CD4-positive, alpha-beta memory T cell (primary cell): ENCODE measurements at regions of chr15 and their contacts with region 1.

Region 1: DNA sequence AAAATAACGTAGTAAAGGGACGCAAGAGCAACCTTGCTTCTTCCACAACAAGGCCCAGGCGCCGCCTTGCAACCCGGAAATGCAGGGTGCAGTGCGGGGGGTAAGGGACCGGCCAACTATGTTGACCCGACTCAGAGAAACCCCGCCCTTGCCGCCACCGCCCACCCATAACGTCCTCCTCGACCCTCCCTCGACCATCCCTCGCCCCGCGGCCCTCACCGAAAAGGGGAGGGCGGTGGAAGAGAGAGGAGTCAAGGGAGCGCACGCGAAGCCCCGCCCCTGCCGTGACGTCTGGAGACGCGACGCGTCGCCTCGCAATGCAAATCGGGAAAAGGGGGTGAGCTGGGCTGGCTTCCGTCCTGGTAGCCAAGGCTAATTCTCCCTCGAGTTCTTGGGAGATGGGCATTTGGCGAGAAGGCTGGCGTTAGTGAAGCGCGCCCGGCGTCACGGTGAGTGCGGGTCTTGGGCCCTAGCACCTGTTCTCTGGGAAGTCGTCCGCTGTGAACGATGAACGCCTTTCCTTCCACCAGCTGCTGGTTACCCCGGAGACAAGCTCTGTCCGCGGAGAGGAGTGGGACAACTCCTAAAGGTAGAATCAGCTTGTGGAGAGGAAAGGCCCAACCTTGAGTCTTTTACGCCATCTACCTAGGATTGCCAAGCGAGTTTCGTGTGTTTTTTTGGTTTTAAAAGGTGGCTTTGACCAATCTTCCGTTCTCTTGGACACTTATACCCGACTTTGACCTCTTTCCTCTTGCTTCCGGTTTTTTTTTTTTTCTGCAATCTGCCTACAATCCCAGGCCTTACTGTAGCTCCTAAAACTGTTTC is at the start of gene USP8:
- DNase-seq: peak; percentile 90 to 93 (median 92)
- H3K4me3 ChIP-seq: peak within 1 kb of the TSS; percentile 99
- H3K4me3 Mint-ChIP-seq: peak within 1 kb of the TSS; percentile 96 to 100 (median 98)
- H3K27ac ChIP-seq: peak within 1 kb of the TSS; percentile 94
- H3K27ac Mint-ChIP-seq: peak within 1 kb of the TSS; percentile 98 to 100 (median 99)
- H3K4me1 ChIP-seq: peaks cover 32% of the 10 kb centered on the region
- H3K4me1 Mint-ChIP-seq: peaks cover 13 to 53% (median 32%) of the 10 kb centered on the region in 4 donors
- H3K27me3 ChIP-seq: no peaks in the 10 kb centered on the region
- H3K27me3 Mint-ChIP-seq: no peaks in the 10 kb centered on the region
- total RNA-seq, gene USP8: 68.9 to 70.9 TPM

Region 2: GRCh38 chr15:50686468-50687301 is 262.4 kb after region 1 on chr15 and contains the start of gene TRPM7:
- CTCF ChIA-PET with region 1: no interaction called
- POLR2A ChIA-PET with region 1: interaction called, 4 read pairs
- intact Hi-C with region 1: loop called (anchors 2 kb)
- DNase-seq: peak; percentile 86 to 90 (median 90)
- H3K4me3 ChIP-seq: peak within 1 kb of the TSS; percentile 89 to 99
- H3K4me3 Mint-ChIP-seq: peak within 1 kb of the TSS; percentile 98 to 100 (median 99)
- H3K27ac ChIP-seq: peak within 1 kb of the TSS; percentile 99
- H3K27ac Mint-ChIP-seq: peak within 1 kb of the TSS; percentile 98 to 100 (median 99)
- H3K4me1 ChIP-seq: peaks cover 52% of the 10 kb centered on the region
- H3K4me1 Mint-ChIP-seq: peaks cover 32 to 61% (median 45%) of the 10 kb centered on the region in 4 donors
- H3K27me3 ChIP-seq: no peaks in the 10 kb centered on the region
- H3K27me3 Mint-ChIP-seq: no peaks in the 10 kb centered on the region
- total RNA-seq, gene TRPM7: 65.3 to 66.7 TPM